HepG2 (cell line): ENCODE measurements at regions of chr3 and their contacts with region 1.

Region 1: GRCh38 chr3:77038468-77038929 is 1.4 kb upstream of the ROBO2 start:
- DNase-seq: peak; percentile 68
- ATAC-seq: peak; percentile 99
- H3K4me3 ChIP-seq: no peak overlapping the region
- H3K27ac ChIP-seq: no peak overlapping the region
- H3K4me1 ChIP-seq: no peaks in the 10 kb centered on the region
- H3K27me3 ChIP-seq: peaks cover 4 to 27% of the 10 kb centered on the region in 2 experiments
- CTCF ChIP-seq: peak; percentile 78
- EP300 ChIP-seq: no peak
- POLR2A ChIP-seq: no peak
- RAD21 ChIP-seq: peak; percentile 63

Region 2: DNA sequence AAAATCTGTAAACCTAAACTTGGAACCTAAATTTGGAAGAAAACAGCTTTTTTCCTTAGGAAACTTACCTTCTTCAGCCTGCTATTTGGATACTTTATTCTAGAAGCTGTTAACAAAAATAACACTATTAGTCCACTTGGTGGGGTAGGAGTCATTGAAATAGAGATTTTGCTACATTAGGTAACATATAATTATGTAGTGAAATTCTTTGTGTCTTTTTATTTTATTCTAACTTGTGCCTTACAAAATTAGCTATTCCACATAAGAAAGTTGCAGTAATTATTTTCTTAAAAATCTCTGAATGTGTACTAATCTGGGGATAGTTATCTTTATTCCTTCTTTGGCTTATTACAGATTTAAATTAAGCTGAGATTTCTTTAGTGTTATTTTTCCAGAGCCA is 359.0 kb before region 1 on chr3:
- CTCF ChIA-PET with region 1: no interaction called
- POLR2A ChIA-PET with region 1: no interaction called
- in situ Hi-C with region 1: no loop called
- intact Hi-C with region 1: loop called (anchors 5 kb)
- DNase-seq: peak; percentile 18
- ATAC-seq: no peak
- H3K4me3 ChIP-seq: no peak overlapping the region
- H3K27ac ChIP-seq: no peak overlapping the region
- H3K4me1 ChIP-seq: no peaks in the 10 kb centered on the region; the same call in 1 of the 2 replicates
- H3K27me3 ChIP-seq: no peaks in the 10 kb centered on the region
- CTCF ChIP-seq: peak; percentile 29; the same call in 1 of the 2 replicates
- EP300 ChIP-seq: no peak
- POLR2A ChIP-seq: no peak
- RAD21 ChIP-seq: no peak

Region 3: GRCh38 chr3:76873532-76874242 is 164.8 kb before region 1 on chr3:
- CTCF ChIA-PET with region 1: no interaction called
- POLR2A ChIA-PET with region 1: no interaction called
- in situ Hi-C with region 1: no loop called
- intact Hi-C with region 1: loop called (anchors 5 kb)
- DNase-seq: peak; percentile 1
- ATAC-seq: peak; percentile 82
- H3K4me3 ChIP-seq: no peak overlapping the region
- H3K27ac ChIP-seq: no peak overlapping the region
- H3K4me1 ChIP-seq: peaks cover 24% of the 10 kb centered on the region
- H3K27me3 ChIP-seq: no peaks in the 10 kb centered on the region
- CTCF ChIP-seq: no peak
- EP300 ChIP-seq: no peak
- POLR2A ChIP-seq: no peak
- RAD21 ChIP-seq: no peak

Region 4: DNA sequence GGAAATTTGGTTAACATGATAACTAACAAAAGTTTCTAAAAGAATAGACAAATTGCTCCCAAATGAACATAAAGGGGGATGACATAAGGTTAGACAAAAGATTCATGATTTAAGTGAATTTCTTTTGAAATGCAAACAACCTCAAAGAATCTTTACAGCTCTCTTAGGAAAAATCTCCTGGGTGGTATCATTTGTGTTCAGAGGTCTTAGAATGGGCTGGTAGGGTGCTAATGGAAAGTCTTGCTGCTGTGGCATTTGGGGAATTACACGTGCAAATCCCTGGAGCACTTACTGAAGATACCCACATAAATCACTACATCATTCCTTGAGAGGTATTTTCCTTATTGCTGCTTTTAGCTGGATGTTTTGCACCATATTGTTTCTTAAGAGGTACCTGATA is 13.0 kb before region 1 on chr3:
- CTCF ChIA-PET with region 1: no interaction called
- POLR2A ChIA-PET with region 1: no interaction called
- in situ Hi-C with region 1: no loop called
- intact Hi-C with region 1: no loop called
- DNase-seq: no peak
- ATAC-seq: no peak
- H3K4me3 ChIP-seq: no peak overlapping the region
- H3K27ac ChIP-seq: no peak overlapping the region
- H3K4me1 ChIP-seq: peaks cover 19% of the 10 kb centered on the region
- H3K27me3 ChIP-seq: no peaks in the 10 kb centered on the region
- CTCF ChIP-seq: no peak
- EP300 ChIP-seq: no peak
- POLR2A ChIP-seq: no peak
- RAD21 ChIP-seq: no peak

Region 5: GRCh38 chr3:77320514-77320913 is 282.0 kb after region 1 on chr3:
- CTCF ChIA-PET with region 1: interaction called, 5 read pairs
- POLR2A ChIA-PET with region 1: no interaction called
- in situ Hi-C with region 1: no loop called
- intact Hi-C with region 1: loop called (anchors 2 kb)
- DNase-seq: peak; percentile 25
- ATAC-seq: no peak
- H3K4me3 ChIP-seq: no peak overlapping the region
- H3K27ac ChIP-seq: no peak overlapping the region
- H3K4me1 ChIP-seq: peaks cover 26% of the 10 kb centered on the region
- H3K27me3 ChIP-seq: no peaks in the 10 kb centered on the region
- CTCF ChIP-seq: peak; percentile 31; the same call in 1 of the 2 replicates
- EP300 ChIP-seq: no peak
- POLR2A ChIP-seq: no peak
- RAD21 ChIP-seq: no peak

Region 6: DNA sequence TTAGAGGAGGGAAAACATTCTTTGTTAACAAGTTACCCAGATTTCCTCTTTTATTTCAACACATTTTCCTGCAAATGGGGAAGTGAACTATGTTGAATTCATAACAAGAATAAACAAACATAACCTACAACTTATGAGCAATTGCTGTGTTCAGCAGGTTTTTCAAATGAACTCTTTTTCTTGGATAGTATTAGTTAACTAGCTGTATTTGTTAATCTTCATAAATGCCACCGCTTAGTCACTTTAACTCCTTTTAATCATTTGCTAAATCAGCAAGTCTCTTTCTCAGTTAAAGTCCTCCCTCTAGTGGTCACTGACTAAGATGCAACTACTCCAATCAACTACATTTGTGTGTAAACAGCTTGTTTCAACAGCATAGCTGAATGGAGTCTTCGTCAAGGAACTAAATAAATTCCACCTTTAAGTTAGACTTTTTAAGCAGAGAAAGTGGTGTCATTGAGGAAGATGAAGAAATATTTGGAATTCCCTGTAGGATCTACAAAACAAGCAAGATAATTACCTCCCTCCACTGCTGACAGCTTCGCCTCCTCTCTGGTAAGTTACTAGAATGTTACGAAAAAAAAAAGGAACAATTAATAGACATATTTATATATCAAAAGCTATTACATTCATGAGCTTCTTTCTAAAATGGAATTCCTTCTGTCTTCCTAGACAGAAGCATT is 1607.3 kb after region 1 on chr3:
- CTCF ChIA-PET with region 1: no interaction called
- POLR2A ChIA-PET with region 1: no interaction called
- in situ Hi-C with region 1: loop called (anchors 25 kb)
- intact Hi-C with region 1: no loop called
- DNase-seq: peak; percentile 78
- ATAC-seq: peak; percentile 84
- H3K4me3 ChIP-seq: no peak overlapping the region
- H3K27ac ChIP-seq: no peak overlapping the region
- H3K4me1 ChIP-seq: no peaks in the 10 kb centered on the region
- H3K27me3 ChIP-seq: no peaks in the 10 kb centered on the region
- CTCF ChIP-seq: peak; percentile 85
- EP300 ChIP-seq: no peak
- POLR2A ChIP-seq: no peak
- RAD21 ChIP-seq: peak; percentile 67; the same call in 1 of the 2 replicates